Gastrocnemius medialis (tissue), 4 donors: ENCODE measurements at regions of chr18 and their contacts with region 1.

Region 1: GRCh38 chr18:51197661-51198424 is at the start of gene MEX3C:
- DNase-seq: peak; percentile 99
- ATAC-seq: peak; percentile 85
- H3K4me3 ChIP-seq: peak within 1 kb of the TSS; percentile 80 to 94 (median 89)
- H3K27ac ChIP-seq: peak within 1 kb of the TSS; percentile 94 to 98 (median 95)
- H3K4me1 ChIP-seq: peaks cover 26 to 27% of the 10 kb centered on the region in 2 donors
- H3K27me3 ChIP-seq: no peaks in the 10 kb centered on the region
- CTCF ChIP-seq: peak in 3 of 5 experiments; percentile 15 to 48 (median 43)
- POLR2A ChIP-seq: peak in 1 of 2 donors; percentile 70
- total RNA-seq, gene MEX3C: 8.8 to 14.9 (median 12.4) TPM

Region 2: DNA sequence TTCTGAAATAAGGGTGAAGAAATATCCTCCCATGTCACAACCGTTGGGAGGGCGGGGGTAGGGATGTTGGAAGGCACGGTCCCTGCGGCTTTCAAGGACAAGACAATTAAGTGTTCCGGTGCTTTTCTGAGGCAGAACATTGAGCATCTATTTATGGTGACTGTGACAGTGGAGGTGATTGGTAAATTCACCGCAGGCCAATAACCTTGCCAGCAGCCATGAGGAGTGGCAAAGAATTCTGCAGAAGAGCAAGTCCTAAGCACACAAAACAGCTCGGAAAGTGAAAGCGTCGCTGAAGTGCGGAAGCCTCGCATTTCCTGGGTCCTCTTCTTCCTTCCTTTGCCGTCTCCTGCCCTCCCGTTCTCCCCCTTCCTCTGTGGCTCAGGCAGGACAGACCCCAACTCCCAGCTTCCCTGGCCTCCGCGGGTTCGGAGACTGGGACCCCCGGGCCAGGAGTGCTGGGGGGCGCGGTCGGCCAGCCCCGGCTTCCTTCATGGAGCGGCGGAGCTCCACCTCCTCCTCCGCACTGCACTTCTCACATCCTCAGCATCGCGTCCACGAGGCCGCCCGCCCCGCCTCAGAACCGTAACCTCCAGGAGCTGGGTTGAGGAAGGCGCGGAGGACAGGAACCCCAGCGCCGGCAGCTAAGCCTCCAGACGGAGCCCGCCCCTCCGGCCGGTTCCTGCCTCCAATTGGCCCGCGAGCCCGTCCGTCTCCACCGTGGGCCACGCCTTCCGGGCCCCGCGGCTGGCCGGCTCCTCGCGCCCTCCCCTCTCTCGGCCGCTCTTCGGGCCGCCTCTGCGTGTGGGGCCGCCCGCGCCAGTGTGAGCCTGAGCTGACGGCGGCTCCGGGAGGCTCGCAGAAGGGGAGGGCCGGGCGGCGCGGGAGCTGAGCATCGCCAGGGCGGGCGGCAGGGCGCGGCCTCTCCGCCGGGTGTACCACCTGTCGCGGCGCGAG is 319.2 kb before region 1 on chr18 and contains the start of gene ME2:
- in situ Hi-C with region 1: loop called in 1 of 4 experiments (anchors 25 kb)
- intact Hi-C with region 1: loop called (anchors 2 kb)
- DNase-seq: peak; percentile 83 to 88
- ATAC-seq: peak; percentile 87 to 91
- H3K4me3 ChIP-seq: peak within 1 kb of the TSS; percentile 80 to 96 (median 89)
- H3K27ac ChIP-seq: peak within 1 kb of the TSS; percentile 88 to 97 (median 94)
- H3K4me1 ChIP-seq: peaks cover 10 to 17% of the 10 kb centered on the region in 2 donors
- H3K27me3 ChIP-seq: no peaks in the 10 kb centered on the region
- CTCF ChIP-seq: peak in 1 of 5 experiments; percentile 5
- POLR2A ChIP-seq: peak; percentile 94 to 98
- total RNA-seq, gene ME2: 25.3 to 50.6 (median 46.5) TPM

Region 3: GRCh38 chr18:51029694-51030536 is 167.9 kb before region 1 on chr18 and contains the start of gene SMAD4:
- in situ Hi-C with region 1: loop called in 1 of 4 experiments (anchors 25 kb)
- intact Hi-C with region 1: loop called (anchors 1 kb)
- DNase-seq: peak; percentile 93 to 95
- ATAC-seq: peak; percentile 90 to 94
- H3K4me3 ChIP-seq: peak within 1 kb of the TSS; percentile 62 to 67 (median 64)
- H3K27ac ChIP-seq: peak within 1 kb of the TSS; percentile 90 to 97 (median 92)
- H3K4me1 ChIP-seq: peaks cover 46 to 57% of the 10 kb centered on the region in 2 donors
- H3K27me3 ChIP-seq: no peaks in the 10 kb centered on the region
- CTCF ChIP-seq: no peak
- POLR2A ChIP-seq: peak; percentile 93 to 96
- total RNA-seq, gene SMAD4: 148 to 210 (median 168) TPM

Region 4: DNA sequence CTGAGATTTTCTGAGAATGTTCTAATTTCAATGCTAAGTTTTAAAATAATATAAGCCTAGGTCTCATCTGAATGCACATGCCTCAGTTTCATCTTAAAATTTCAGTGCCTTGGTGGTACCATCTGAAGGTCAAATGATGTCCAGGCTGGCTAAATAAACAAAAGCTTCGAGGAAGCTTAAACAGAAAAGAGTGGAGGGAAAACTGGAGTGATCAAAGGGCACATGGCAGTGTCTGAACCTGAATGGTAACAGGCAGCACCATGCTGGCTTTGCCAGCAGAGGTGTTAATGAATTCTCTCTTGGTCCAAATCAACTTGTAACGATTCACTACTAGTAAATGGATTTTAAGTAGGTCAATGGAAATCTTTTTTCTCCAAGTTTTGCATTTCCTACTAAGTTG is 158.0 kb after region 1 on chr18:
- in situ Hi-C with region 1: no loop called
- intact Hi-C with region 1: loop called (anchors 2 kb)
- DNase-seq: no peak
- ATAC-seq: no peak
- H3K4me3 ChIP-seq: no peak overlapping the region
- H3K27ac ChIP-seq: no peak overlapping the region
- H3K4me1 ChIP-seq: no peaks in the 10 kb centered on the region
- H3K27me3 ChIP-seq: no peaks in the 10 kb centered on the region
- CTCF ChIP-seq: no peak
- POLR2A ChIP-seq: no peak